MCF 10A (cell line): ENCODE measurements at regions of chr9 and their contacts with region 1.

Region 1: DNA sequence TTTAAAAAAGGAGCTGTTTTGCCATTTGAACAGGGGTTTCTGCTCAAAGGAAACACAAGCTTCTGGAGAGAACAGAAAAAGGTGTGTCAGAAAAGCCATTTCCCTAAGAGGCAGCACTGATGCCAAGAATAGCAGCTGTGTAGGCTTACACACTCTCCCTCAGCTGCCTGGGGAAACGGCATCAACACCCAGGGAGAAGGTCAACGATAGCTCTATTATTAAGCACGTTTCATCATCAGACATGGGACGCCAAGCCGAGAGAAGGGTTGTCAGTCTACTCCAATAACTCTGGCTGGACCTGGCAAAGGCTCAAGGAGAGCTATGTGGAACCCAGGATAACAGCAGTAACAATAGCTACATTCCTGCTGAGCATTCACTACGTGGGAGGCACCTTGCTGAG is 314.2 kb downstream of the CDK5RAP2 start:
- DNase-seq: peak; percentile 52
- H3K4me3 Mint-ChIP-seq: no peak overlapping the region
- H3K27ac Mint-ChIP-seq: no peak overlapping the region
- H3K4me1 Mint-ChIP-seq: peaks cover 10% of the 10 kb centered on the region
- H3K27me3 Mint-ChIP-seq: peaks cover 22% of the 10 kb centered on the region
- CTCF ChIP-seq: no peak

Region 2: GRCh38 chr9:120281665-120282064 is 15.9 kb after region 1 on chr9:
- CTCF ChIA-PET with region 1: interaction called, 4 read pairs
- POLR2A ChIA-PET with region 1: no interaction called
- intact Hi-C with region 1: loop called (anchors 2 kb)
- DNase-seq: no peak
- H3K4me3 Mint-ChIP-seq: no peak overlapping the region
- H3K27ac Mint-ChIP-seq: no peak overlapping the region
- H3K4me1 Mint-ChIP-seq: peaks cover 27% of the 10 kb centered on the region
- H3K27me3 Mint-ChIP-seq: no peaks in the 10 kb centered on the region
- CTCF ChIP-seq: no peak